K562 (cell line): ENCODE measurements at regions of chr2 and their contacts with region 1.

Region 1: DNA sequence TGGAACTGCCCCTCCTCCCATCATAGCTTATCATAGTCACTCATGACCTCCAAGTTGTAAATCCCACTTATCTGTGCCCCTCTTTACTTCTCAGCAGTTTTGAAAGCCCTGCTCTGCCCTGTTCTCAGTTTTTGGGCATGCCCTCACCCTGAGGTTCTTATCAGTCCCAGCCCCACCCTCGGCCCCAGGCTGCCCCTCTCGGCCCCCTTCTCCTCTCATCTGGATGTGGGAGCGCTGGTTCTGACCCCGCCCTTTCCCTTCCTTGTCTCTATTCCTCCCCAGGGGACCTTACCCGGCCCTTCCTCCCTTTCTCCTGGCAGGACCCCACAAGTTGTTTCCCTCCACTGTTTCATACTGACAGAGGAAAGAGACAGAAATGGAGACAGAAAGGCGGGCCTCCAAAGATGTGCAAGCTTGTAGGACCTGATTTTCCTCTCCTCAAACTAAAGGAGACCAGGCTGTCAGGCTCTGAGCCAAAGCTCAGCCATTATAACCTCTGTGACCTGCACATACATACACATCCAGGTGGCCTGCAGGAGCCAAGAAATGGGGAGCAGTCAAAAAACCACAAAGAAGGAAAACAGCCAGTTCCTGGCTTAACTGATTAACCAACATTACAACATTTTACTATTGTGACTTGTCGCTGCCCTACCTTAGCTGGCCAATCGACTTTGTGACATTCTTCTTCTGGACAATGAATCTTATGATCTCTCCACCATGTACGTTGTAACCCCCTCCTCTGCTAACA is 171.0 kb upstream of the HS6ST1 start:
- DNase-seq: no peak
- ATAC-seq: no peak
- H3K4me3 ChIP-seq: no peak overlapping the region
- H3K27ac ChIP-seq: no peak overlapping the region
- H3K4me1 ChIP-seq: peaks cover 0 to 15% of the 10 kb centered on the region in 2 experiments; a peak in 2 of 5 replicates
- H3K27me3 ChIP-seq: peaks cover 0 to 50% of the 10 kb centered on the region in 2 experiments; a peak in 3 of 5 replicates
- CTCF ChIP-seq: no peak
- EP300 ChIP-seq: no peak
- POLR2A ChIP-seq: no peak
- RAD21 ChIP-seq: no peak

Region 2: DNA sequence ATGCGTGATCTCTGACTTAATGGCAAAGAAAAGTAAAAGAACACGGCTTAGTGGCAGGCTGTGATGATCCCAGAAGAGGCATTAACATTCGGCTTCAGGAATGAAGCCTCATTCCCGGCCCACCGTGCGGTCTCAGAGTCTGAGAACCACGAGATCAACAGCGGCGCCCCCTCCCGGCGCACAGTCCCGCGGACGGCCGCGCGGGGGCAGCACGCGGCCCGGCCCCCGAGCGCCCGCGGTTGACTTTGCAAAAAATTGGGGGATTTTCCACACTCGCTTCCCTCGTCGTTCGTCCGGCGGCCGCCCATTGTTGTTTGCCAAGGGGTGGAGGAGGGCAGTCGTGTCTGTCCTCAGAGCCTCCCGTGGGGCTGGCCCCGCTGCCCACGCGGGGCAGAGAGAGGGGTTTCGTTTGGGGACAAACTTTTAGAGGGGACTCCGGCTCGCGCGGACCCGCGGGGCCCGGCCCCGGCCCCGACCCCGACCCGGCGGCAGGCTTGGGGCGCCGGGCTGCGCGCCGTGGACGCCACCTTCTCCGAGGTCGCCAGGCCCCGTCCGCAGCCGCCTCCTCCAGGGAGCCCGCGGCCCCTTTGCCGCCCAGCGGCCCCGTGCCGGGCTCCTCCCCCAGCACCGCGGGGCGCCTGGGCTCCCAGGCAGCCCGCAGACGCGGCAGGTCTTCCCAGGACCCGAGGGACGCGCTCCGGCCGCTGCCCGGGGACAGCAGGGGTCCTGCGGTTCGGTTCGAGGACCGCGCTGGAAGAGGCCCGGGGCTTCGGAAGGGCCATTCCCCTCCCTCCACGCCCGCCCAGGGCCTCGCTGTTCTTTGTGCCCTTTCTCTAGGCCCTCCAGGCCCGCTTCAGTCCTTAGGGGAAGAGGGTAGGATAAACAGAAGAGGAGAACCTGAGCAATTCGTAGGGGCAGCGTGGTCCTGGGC is 167.7 kb before region 1 on chr2:
- CTCF ChIA-PET with region 1: no interaction called
- POLR2A ChIA-PET with region 1: no interaction called
- in situ Hi-C with region 1: no loop called
- intact Hi-C with region 1: loop called (anchors 10 kb)
- DNase-seq: peak; percentile 88 to 92 (median 89)
- ATAC-seq: peak; percentile 78
- H3K4me3 ChIP-seq: peak overlapping the region; percentile 62
- H3K27ac ChIP-seq: peak overlapping the region; percentile 80
- H3K4me1 ChIP-seq: peaks cover 2 to 66% of the 10 kb centered on the region in 2 experiments; a peak in 3 of 5 replicates
- H3K27me3 ChIP-seq: peaks cover 0 to 30% of the 10 kb centered on the region in 2 experiments; a peak in 3 of 5 replicates
- CTCF ChIP-seq: peak; percentile 83 to 90 (median 89)
- EP300 ChIP-seq: no peak
- POLR2A ChIP-seq: no peak; the same call in 1 of the 2 replicates
- RAD21 ChIP-seq: peak; percentile 78 to 94

Region 3: GRCh38 chr2:128868686-128869551 is 379.2 kb after region 1 on chr2:
- CTCF ChIA-PET with region 1: no interaction called
- POLR2A ChIA-PET with region 1: no interaction called
- in situ Hi-C with region 1: no loop called
- intact Hi-C with region 1: no loop called
- DNase-seq: no peak
- ATAC-seq: no peak
- H3K4me3 ChIP-seq: no peak overlapping the region
- H3K27ac ChIP-seq: no peak overlapping the region
- H3K4me1 ChIP-seq: no peaks in the 10 kb centered on the region
- H3K27me3 ChIP-seq: peaks cover 0 to 4% of the 10 kb centered on the region in 2 experiments; a peak in 1 of 5 replicates
- CTCF ChIP-seq: no peak
- EP300 ChIP-seq: no peak
- POLR2A ChIP-seq: no peak
- RAD21 ChIP-seq: no peak